ENCODE measurements at regions of chr14 and their contacts with region 1.

Region 1: GRCh38 chr14:60331201-60332045 is 82.4 kb downstream of the PPM1A start:
- DNase-seq: peak; percentile 71
- H3K4me3 Mint-ChIP-seq: peak overlapping the region; percentile 76
- H3K27ac Mint-ChIP-seq: no peak overlapping the region
- H3K4me1 Mint-ChIP-seq: peaks cover 23% of the 10 kb centered on the region
- H3K27me3 Mint-ChIP-seq: peaks cover 30% of the 10 kb centered on the region
- CTCF ChIP-seq: peak; percentile 72

Region 2: GRCh38 chr14:60195179-60195810 is 136.1 kb before region 1 on chr14:
- CTCF ChIA-PET with region 1: no interaction called
- intact Hi-C with region 1: loop called (anchors 5 kb)
- DNase-seq: no peak
- H3K4me3 Mint-ChIP-seq: no peak overlapping the region
- H3K27ac Mint-ChIP-seq: no peak overlapping the region
- H3K4me1 Mint-ChIP-seq: peaks cover 9% of the 10 kb centered on the region
- H3K27me3 Mint-ChIP-seq: no peaks in the 10 kb centered on the region
- CTCF ChIP-seq: no peak

Region 3: GRCh38 chr14:60249321-60250256 is 81.8 kb before region 1 on chr14:
- CTCF ChIA-PET with region 1: interaction called, 3 read pairs
- intact Hi-C with region 1: loop called (anchors 5 kb)
- DNase-seq: peak; percentile 76
- H3K4me3 Mint-ChIP-seq: peak overlapping the region; percentile 99
- H3K27ac Mint-ChIP-seq: peak overlapping the region; percentile 99
- H3K4me1 Mint-ChIP-seq: peaks cover 42% of the 10 kb centered on the region
- H3K27me3 Mint-ChIP-seq: no peaks in the 10 kb centered on the region
- CTCF ChIP-seq: no peak